ENCODE measurements at regions of chr10 and their contacts with region 1.

Region 1: GRCh38 chr10:45008524-45009161 is 7.9 kb downstream of the ZNF22 start:
- DNase-seq: peak in 3 of 14 experiments; percentile 76
- ATAC-seq: peak; percentile 79
- H3K4me3 ChIP-seq: no peak overlapping the region
- H3K4me3 Mint-ChIP-seq: no peak overlapping the region
- H3K27ac ChIP-seq: no peak overlapping the region
- H3K27ac Mint-ChIP-seq: no peak overlapping the region
- H3K4me1 ChIP-seq: no peaks in the 10 kb centered on the region
- H3K4me1 Mint-ChIP-seq: peaks cover 4% of the 10 kb centered on the region
- H3K27me3 ChIP-seq: no peaks in the 10 kb centered on the region
- H3K27me3 Mint-ChIP-seq: no peaks in the 10 kb centered on the region
- CTCF ChIP-seq: peak; percentile 88

Region 2: DNA sequence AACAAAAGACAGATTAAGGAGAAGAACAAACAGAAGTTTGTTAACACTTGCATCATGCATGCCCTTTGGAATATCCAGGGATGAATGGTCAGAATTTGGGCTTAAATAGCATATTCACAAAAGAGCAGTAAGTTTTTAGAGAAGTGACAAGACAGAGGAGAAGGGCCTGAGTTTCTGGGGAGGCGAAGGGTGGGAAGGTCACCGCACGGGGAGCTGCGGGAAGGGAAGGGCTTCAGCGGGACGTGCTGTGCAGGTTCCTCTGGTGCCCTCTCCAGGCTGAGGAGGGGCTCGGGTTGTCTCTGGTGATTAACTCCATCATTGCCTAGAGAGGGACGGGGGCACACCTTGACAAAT is 18.4 kb before region 1 on chr10:
- CTCF ChIA-PET with region 1: no interaction called
- POLR2A ChIA-PET with region 1: no interaction called
- intact Hi-C with region 1: no loop called
- DNase-seq: peak in 1 of 14 experiments; percentile 8
- ATAC-seq: no peak
- H3K4me3 ChIP-seq: no peak overlapping the region
- H3K4me3 Mint-ChIP-seq: no peak overlapping the region
- H3K27ac ChIP-seq: no peak overlapping the region
- H3K27ac Mint-ChIP-seq: no peak overlapping the region
- H3K4me1 ChIP-seq: peaks cover 6% of the 10 kb centered on the region
- H3K4me1 Mint-ChIP-seq: peaks cover 3% of the 10 kb centered on the region
- H3K27me3 ChIP-seq: no peaks in the 10 kb centered on the region
- H3K27me3 Mint-ChIP-seq: no peaks in the 10 kb centered on the region
- CTCF ChIP-seq: no peak

Region 3: GRCh38 chr10:45235798-45236231 is 227.2 kb after region 1 on chr10:
- CTCF ChIA-PET with region 1: no interaction called
- POLR2A ChIA-PET with region 1: no interaction called
- intact Hi-C with region 1: loop called in 1 of 2 experiments (anchors 10 kb)
- DNase-seq: no peak
- ATAC-seq: no peak
- H3K4me3 ChIP-seq: no peak overlapping the region
- H3K4me3 Mint-ChIP-seq: no peak overlapping the region
- H3K27ac ChIP-seq: no peak overlapping the region
- H3K27ac Mint-ChIP-seq: no peak overlapping the region
- H3K4me1 ChIP-seq: no peaks in the 10 kb centered on the region
- H3K4me1 Mint-ChIP-seq: peaks cover 3% of the 10 kb centered on the region
- H3K27me3 ChIP-seq: no peaks in the 10 kb centered on the region
- H3K27me3 Mint-ChIP-seq: peaks cover 15% of the 10 kb centered on the region
- CTCF ChIP-seq: no peak